ENCODE measurements at regions of chr9 and their contacts with region 1.

Region 1: GRCh38 chr9:35436933-35437332 is 53.0 kb upstream of the RUSC2 start:
- DNase-seq: no peak
- H3K4me3 ChIP-seq: no peak overlapping the region
- H3K27ac ChIP-seq: no peak overlapping the region
- H3K4me1 ChIP-seq: no peaks in the 10 kb centered on the region
- H3K27me3 ChIP-seq: peaks cover 10% of the 10 kb centered on the region
- CTCF ChIP-seq: no peak

Region 2: DNA sequence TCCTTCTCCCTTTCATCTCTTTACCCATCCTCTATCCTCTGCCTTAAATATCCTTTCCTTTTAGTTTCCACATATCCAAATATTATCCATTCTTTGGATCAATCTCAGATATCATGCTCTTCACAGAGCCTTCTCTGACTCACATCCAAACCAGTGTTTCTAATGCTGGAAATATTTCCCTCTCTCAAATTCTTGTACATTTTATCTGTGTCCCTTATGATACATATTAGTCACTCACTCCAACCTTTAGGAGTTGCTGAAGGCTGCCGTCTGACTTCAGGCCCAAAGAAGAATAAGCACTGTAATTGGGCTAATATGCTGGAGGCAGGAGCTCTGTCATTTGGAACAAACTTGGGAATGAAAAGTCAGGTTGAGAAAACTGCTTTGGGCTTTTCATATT is 103.4 kb before region 1 on chr9:
- CTCF ChIA-PET with region 1: no interaction called
- POLR2A ChIA-PET with region 1: no interaction called
- intact Hi-C with region 1: loop called (anchors 10 kb)
- DNase-seq: no peak
- H3K4me3 ChIP-seq: no peak overlapping the region
- H3K27ac ChIP-seq: no peak overlapping the region
- H3K4me1 ChIP-seq: no peaks in the 10 kb centered on the region
- H3K27me3 ChIP-seq: no peaks in the 10 kb centered on the region
- CTCF ChIP-seq: no peak

Region 3: GRCh38 chr9:36268007-36268427 is 831.1 kb after region 1 on chr9:
- CTCF ChIA-PET with region 1: no interaction called
- POLR2A ChIA-PET with region 1: no interaction called
- intact Hi-C with region 1: loop called (anchors 10 kb)
- DNase-seq: no peak
- H3K4me3 ChIP-seq: no peak overlapping the region
- H3K27ac ChIP-seq: no peak overlapping the region
- H3K4me1 ChIP-seq: no peaks in the 10 kb centered on the region
- H3K27me3 ChIP-seq: no peaks in the 10 kb centered on the region
- CTCF ChIP-seq: no peak